ENCODE measurements at regions of chr3 and their contacts with region 1.

Region 1: GRCh38 chr3:134464064-134464697 is 21.6 kb downstream of the ANAPC13 start:
- DNase-seq: peak; percentile 100
- H3K4me3 ChIP-seq: no peak overlapping the region
- CTCF ChIP-seq: no peak

Region 2: GRCh38 chr3:134277066-134277660 is 187.0 kb before region 1 on chr3:
- CTCF ChIA-PET with region 1: no interaction called
- POLR2A ChIA-PET with region 1: no interaction called
- DNase-seq: no peak
- H3K4me3 ChIP-seq: no peak overlapping the region
- CTCF ChIP-seq: no peak

Region 3: GRCh38 chr3:134364061-134364935 is 99.9 kb before region 1 on chr3:
- CTCF ChIA-PET with region 1: interaction called, 4 read pairs
- POLR2A ChIA-PET with region 1: interaction called, 12 read pairs
- DNase-seq: peak; percentile 95
- H3K4me3 ChIP-seq: peak overlapping the region; percentile 42
- CTCF ChIP-seq: no peak

Region 4: DNA sequence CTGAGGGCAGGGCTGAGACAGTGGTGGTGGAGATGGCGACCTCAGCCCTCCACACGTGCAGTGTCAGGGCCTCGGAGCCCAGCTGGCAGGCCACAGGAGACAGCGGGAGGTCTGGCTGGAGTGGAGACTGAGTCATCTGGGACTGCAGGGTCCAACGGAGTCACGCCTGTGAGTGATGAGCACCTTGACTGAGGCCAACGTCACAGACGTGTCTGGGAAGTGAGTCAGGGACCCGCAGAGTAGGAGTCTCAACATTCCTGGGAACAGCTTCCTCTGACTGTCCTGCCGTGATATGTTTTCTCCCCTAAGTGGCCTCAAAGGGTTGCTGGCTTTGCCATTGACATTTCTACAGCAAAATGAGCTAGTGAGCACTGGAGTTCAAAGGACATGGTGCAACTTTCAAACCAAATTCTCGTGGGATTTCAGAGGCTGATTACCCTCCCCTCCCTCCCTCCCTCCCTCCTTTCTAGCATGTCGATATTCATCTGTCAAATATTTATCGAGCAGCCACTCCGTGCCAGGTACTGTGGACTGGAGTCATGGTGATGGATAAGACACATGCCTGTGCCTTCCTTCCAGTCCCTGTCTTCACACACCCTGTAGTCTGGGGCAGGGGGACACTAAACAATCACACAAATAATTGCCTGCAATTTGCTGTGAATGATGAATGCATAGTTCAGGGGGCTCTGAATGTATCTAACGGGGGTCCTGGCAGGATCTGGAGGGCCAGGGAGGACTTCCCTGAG is 36.6 kb before region 1 on chr3:
- CTCF ChIA-PET with region 1: interaction called, 4 read pairs
- POLR2A ChIA-PET with region 1: interaction called, 11 read pairs
- DNase-seq: peak; percentile 99
- H3K4me3 ChIP-seq: no peak overlapping the region
- CTCF ChIP-seq: no peak

Region 5: GRCh38 chr3:134449277-134449676 is 14.9 kb before region 1 on chr3:
- CTCF ChIA-PET with region 1: interaction called, 44 read pairs
- POLR2A ChIA-PET with region 1: no interaction called
- DNase-seq: no peak
- H3K4me3 ChIP-seq: no peak overlapping the region
- CTCF ChIP-seq: peak; percentile 22

Region 6: GRCh38 chr3:134485718-134486576 is 21.8 kb after region 1 on chr3 and contains the starts of genes ANAPC13 and CEP63:
- CTCF ChIA-PET with region 1: interaction called, 11 read pairs
- POLR2A ChIA-PET with region 1: interaction called, 7 read pairs
- DNase-seq: peak; percentile 96
- H3K4me3 ChIP-seq: peak within 1 kb of the TSS; percentile 82
- CTCF ChIP-seq: no peak

Measured in AG04449 (cell line).